GM10248 (cell line): ENCODE measurements at regions of chr3 and their contacts with region 1.

Region 1: DNA sequence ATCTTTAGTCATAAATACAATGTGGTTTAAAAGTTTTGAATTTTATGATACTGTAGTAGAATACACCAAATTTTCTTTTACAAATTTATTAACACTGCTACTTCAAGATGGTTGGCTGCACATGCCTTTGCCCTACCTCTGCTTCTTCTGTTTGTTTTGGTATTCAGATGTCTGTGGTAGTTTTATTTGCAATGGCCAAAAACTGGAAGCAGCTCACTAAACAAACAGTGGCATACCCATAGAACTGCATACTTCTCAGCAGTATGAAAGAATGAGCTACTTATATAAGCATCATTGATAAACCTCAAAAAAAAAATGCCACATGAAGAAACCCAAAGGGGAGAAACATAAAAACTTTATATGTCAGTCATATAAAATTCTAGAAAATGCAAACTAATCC is 19.5 kb downstream of the ARIH2 start:
- DNase-seq: no peak
- CTCF ChIP-seq: no peak

Region 2: DNA sequence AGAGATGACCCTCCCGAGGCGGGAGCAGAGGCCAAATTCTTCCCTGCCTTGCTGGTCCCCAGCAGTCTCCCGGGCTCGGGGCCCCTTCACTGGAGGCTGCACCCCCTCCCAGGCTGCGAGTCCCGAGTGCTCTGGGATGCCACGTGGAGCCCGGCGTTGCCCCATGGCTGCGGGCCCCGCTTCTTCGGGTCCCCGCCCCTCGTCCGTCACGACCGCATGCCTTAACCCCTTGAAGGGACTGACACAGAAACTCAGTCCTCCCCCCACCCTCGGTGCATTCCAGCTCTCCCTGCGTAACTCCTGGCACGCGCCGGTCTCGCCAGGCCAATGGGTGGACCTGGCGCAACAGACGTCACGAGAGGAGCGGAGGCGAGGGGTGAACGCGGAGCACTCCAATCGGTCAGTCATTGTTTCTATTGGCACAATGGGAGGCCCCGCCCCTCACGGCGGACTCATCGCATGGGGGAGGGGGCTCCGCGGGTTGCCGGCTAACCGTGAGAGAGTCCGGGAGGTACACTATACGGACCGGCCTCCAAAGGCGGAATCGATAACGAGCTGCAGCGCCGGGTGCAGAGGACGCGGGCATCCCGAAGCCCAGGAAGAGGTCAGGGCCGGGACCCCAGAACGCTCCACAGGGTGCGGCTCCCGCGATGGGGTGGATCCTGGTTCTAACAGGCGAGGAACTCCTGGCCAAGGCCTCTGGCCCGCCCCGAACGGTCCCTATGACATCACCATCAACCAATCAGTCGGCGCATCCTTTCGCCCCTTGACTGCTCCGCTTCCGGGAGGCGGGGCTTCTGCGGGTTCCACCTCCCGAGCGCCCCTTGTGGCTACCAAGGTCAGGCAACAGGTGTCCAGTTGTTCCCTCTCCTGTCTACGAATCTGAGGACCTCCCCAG is 274.5 kb before region 1 on chr3:
- CTCF ChIA-PET with region 1: no interaction called
- POLR2A ChIA-PET with region 1: no interaction called
- DNase-seq: peak; percentile 100
- CTCF ChIP-seq: peak; percentile 86

Region 3: GRCh38 chr3:48926425-48927392 is 11.4 kb before region 1 on chr3:
- CTCF ChIA-PET with region 1: no interaction called
- POLR2A ChIA-PET with region 1: interaction called, 12 read pairs
- DNase-seq: no peak
- CTCF ChIP-seq: no peak

Region 4: DNA sequence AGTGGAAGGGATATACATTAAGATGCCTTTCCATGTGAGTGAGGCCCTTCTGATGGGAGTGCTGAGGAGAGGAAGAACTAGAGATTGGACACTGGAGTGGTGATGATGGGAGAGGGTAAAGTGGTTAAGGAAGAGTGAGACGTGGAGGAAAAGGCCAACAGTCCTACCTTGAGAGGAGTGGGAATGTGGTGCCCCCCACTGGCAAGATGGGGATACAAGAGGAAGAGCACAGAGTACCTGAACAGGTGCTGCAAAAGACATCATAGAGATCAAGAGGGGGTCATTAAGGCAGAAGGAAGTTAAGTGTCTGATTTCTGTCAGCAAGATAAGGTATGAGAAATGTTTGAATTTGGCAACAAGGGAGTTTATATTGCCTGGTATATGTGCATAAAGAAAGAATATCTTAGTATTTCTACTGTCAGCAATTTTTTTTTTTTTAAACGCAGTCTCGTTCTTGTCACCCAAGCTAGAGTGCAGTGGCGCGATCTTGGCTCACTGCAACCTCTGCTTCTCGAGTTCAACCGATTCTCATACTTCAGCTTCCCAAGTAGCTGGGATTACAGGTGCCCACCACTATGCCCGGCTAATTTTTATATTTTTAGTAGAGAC is 14.5 kb after region 1 on chr3:
- CTCF ChIA-PET with region 1: interaction called, 10 read pairs
- POLR2A ChIA-PET with region 1: no interaction called
- DNase-seq: peak; percentile 48
- CTCF ChIP-seq: peak; percentile 47